ENCODE measurements at regions of chr19 and their contacts with region 1.

Region 1: DNA sequence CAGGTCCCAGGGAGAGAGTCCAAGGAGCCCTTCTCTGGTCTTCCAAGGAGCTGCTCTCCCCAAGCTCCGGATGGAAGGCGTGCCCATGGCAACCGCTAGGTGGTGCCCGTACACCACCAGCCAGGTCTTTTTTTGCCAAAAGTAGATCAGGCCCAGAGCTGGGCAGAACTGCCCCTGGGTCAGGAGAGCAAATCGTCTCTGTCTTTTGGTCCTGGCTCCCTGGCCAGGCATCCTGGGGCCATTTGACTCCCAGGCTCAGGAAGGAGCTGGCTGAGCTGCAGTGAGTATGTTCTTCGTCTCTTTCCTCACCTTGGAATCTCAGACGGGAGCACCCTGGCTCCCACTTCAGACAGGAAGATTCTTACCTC is 24.6 kb upstream of the BCL3 start:
- DNase-seq: peak; percentile 68
- ATAC-seq: peak; percentile 89
- H3K4me3 ChIP-seq: no peak overlapping the region
- H3K27ac ChIP-seq: peak overlapping the region; percentile 14; the same call in 1 of the 2 replicates
- H3K4me1 ChIP-seq: peaks cover 38 to 58% of the 10 kb centered on the region in 2 experiments
- H3K27me3 ChIP-seq: no peaks in the 10 kb centered on the region
- CTCF ChIP-seq: peak; percentile 94 to 99 (median 95)
- POLR2A ChIP-seq: no peak
- RAD21 ChIP-seq: peak; percentile 100

Region 2: DNA sequence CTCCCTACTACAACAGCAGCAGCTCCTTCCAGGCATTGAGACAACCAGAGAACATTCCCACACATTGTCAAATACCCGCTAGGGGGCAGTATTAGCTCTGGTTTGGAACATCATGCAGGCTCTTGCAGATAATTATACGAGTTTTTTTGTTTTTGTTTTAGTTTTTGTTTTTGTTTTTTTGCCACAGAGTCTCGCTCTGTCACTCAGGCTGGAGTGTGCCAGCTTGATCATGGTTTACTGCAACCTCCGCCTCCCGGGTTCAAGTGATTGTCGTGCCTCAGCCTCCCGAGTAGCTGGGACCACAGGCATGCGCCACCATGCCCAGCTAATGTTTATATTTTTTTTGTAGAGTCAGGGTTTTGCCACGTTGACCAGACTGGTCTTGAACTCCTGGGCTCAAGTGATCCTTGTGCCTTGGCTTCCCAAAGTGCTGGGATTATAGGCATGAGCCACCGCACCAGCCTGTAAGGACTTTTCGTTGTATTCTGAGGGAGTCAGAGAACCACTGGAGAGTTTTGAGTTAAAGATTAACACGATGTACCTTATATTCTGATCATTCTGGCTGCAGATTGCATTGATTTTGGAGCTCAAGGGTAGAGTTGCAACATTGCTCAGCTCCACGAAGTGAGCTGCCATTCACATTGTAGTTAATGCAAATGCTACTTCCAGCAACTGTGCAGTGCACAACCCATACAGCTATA is 152.8 kb before region 1 on chr19:
- CTCF ChIA-PET with region 1: interaction called, 12 read pairs
- POLR2A ChIA-PET with region 1: no interaction called
- RAD21 ChIA-PET with region 1: interaction called, 3 to 7 read pairs
- intact Hi-C with region 1: no loop called
- DNase-seq: peak; percentile 76
- ATAC-seq: peak; percentile 96
- H3K4me3 ChIP-seq: no peak overlapping the region
- H3K27ac ChIP-seq: no peak overlapping the region
- H3K4me1 ChIP-seq: no peaks in the 10 kb centered on the region; a peak in 1 of 4 replicates
- H3K27me3 ChIP-seq: no peaks in the 10 kb centered on the region
- CTCF ChIP-seq: peak; percentile 77 to 82 (median 79)
- POLR2A ChIP-seq: no peak
- RAD21 ChIP-seq: peak; percentile 88

Region 3: DNA sequence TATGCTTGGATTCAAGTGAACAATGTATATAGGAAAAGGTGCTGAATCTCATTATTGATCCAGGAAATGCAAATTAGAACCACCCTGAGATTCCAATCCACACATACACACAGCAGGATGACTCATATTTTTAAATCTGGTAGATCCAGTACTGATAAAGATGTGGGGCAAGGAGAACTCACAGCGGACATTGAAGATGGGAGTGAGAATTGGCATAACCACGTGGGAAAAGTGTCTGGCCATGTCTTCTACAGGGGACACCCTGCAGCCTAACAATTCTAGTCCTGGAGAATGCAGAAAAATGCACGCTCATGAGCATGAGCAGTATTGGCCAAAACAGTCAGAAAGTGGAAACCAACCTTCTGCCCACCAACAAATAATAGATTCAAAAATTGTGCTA is 11.1 kb after region 1 on chr19:
- CTCF ChIA-PET with region 1: interaction called, 10 read pairs
- POLR2A ChIA-PET with region 1: no interaction called
- RAD21 ChIA-PET with region 1: interaction called in 1 of 2 experiments, 3 read pairs
- intact Hi-C with region 1: loop called (anchors 1 kb)
- DNase-seq: no peak
- ATAC-seq: peak; percentile 65
- H3K4me3 ChIP-seq: no peak overlapping the region
- H3K27ac ChIP-seq: no peak overlapping the region
- H3K4me1 ChIP-seq: peaks cover 43 to 54% of the 10 kb centered on the region in 2 experiments
- H3K27me3 ChIP-seq: no peaks in the 10 kb centered on the region
- CTCF ChIP-seq: no peak
- POLR2A ChIP-seq: no peak
- RAD21 ChIP-seq: no peak

Region 4: DNA sequence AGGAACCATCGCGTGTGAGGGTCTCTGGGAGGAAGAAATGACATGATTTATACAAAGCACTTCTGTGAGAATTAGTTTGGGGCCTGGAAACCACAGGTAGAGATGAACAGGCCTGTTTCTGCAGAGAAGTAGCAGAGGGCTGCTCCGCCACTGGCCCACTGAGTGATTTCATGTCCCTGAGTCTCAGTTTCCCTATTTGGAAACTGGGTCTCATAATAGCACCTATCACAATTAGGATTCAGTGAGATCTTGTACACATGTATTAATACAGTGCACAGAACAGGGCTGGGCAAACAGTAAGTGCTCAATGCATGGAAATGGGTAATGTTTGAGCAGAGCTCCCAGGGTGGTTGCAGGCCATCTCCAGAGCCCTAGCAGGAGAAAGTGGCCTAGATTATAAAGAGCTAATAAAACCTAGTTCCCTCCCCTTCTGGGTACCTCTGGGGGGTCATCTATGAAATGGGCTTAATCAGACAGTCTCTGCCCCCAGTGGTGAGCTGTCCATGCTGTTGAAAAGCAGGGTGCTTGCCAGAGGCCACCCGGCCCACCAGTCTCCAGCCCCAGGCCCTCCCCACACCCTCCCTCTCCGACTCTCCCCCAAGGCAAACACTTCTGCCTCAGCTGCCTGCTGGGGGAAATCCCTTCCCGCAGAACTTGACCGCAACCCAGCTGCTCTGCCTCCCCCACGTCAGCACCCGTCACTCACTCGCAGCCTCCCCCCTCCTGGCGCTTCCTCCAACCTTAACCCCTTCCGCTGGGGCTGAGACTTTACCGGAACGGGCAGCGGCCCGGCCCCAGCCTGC is 29.1 kb after region 1 on chr19:
- CTCF ChIA-PET with region 1: interaction called, 6 read pairs
- POLR2A ChIA-PET with region 1: interaction called, 5 read pairs
- RAD21 ChIA-PET with region 1: interaction called, 4 to 12 read pairs
- intact Hi-C with region 1: no loop called
- DNase-seq: no peak
- ATAC-seq: peak; percentile 67
- H3K4me3 ChIP-seq: peak overlapping the region; percentile 50 to 70
- H3K27ac ChIP-seq: peak overlapping the region; percentile 95
- H3K4me1 ChIP-seq: peaks cover 35 to 68% of the 10 kb centered on the region in 2 experiments
- H3K27me3 ChIP-seq: no peaks in the 10 kb centered on the region
- CTCF ChIP-seq: peak in 2 of 3 experiments; percentile 15 to 19; a peak in 2 of 6 replicates
- POLR2A ChIP-seq: no peak
- RAD21 ChIP-seq: no peak

Region 5: DNA sequence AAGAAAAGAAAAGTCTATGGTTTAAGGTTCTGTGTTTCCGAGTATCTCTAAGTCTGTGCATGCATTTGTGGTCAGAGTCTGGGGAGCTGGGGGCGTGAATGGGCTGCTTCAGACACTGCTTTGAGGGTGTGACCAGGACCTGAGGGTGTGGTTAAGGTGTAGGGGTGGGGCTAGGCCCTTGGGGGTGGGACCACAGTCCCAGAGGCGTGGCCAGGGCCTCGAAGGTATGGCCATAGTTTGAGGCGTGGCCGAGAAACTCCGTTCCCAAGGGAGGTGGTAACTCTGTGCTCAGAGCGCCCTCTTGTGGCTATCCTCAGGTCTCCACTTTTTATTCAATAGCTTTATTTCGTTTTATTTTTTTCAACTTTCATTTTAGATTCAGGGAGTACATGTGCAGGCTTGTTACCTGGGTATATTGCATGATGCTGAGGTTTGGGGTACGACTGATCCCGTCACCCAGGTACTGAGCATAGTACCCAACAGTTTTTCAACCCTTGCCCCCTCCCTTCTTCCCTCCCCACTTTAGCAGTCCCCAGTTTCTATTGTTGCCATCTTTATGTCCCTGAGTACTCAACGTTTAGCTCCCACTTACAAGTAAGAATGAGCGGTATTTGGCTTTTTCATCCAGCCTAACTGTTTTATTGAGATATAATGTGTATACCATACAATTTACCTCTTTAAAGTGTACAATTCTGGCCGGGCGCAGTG is 46.8 kb after region 1 on chr19:
- CTCF ChIA-PET with region 1: interaction called, 219 read pairs
- POLR2A ChIA-PET with region 1: interaction called, 17 read pairs
- RAD21 ChIA-PET with region 1: interaction called, 75 read pairs
- intact Hi-C with region 1: loop called (anchors 1 kb)
- DNase-seq: peak; percentile 96
- ATAC-seq: peak; percentile 95
- H3K4me3 ChIP-seq: peak overlapping the region in 1 of 2 experiments; percentile 9; a peak in 1 of 4 replicates
- H3K27ac ChIP-seq: peak overlapping the region; percentile 18; the same call in 1 of the 2 replicates
- H3K4me1 ChIP-seq: peaks cover 33 to 50% of the 10 kb centered on the region in 2 experiments
- H3K27me3 ChIP-seq: no peaks in the 10 kb centered on the region
- CTCF ChIP-seq: peak; percentile 62 to 93 (median 83); a peak in 5 of 6 replicates
- POLR2A ChIP-seq: no peak
- RAD21 ChIP-seq: peak; percentile 99

Region 6: GRCh38 chr19:44845612-44846454 is 121.9 kb after region 1 on chr19 and contains the start of gene NECTIN2:
- CTCF ChIA-PET with region 1: interaction called, 12 read pairs
- POLR2A ChIA-PET with region 1: no interaction called
- RAD21 ChIA-PET with region 1: interaction called in 1 of 2 experiments, 5 read pairs
- intact Hi-C with region 1: loop called (anchors 1 kb)
- DNase-seq: peak; percentile 98
- ATAC-seq: peak; percentile 66
- H3K4me3 ChIP-seq: peak within 1 kb of the TSS; percentile 98 to 99
- H3K27ac ChIP-seq: peak within 1 kb of the TSS; percentile 92
- H3K4me1 ChIP-seq: peaks cover 22 to 66% of the 10 kb centered on the region in 2 experiments
- H3K27me3 ChIP-seq: no peaks in the 10 kb centered on the region
- CTCF ChIP-seq: peak; percentile 69 to 87 (median 72); a peak in 5 of 6 replicates
- POLR2A ChIP-seq: no peak
- RAD21 ChIP-seq: no peak; the same call in none of the 2 replicates
- total RNA-seq, gene NECTIN2: 96.3 TPM